WTC11 (cell line): ENCODE measurements at regions of chr14 and their contacts with region 1.

Region 1: DNA sequence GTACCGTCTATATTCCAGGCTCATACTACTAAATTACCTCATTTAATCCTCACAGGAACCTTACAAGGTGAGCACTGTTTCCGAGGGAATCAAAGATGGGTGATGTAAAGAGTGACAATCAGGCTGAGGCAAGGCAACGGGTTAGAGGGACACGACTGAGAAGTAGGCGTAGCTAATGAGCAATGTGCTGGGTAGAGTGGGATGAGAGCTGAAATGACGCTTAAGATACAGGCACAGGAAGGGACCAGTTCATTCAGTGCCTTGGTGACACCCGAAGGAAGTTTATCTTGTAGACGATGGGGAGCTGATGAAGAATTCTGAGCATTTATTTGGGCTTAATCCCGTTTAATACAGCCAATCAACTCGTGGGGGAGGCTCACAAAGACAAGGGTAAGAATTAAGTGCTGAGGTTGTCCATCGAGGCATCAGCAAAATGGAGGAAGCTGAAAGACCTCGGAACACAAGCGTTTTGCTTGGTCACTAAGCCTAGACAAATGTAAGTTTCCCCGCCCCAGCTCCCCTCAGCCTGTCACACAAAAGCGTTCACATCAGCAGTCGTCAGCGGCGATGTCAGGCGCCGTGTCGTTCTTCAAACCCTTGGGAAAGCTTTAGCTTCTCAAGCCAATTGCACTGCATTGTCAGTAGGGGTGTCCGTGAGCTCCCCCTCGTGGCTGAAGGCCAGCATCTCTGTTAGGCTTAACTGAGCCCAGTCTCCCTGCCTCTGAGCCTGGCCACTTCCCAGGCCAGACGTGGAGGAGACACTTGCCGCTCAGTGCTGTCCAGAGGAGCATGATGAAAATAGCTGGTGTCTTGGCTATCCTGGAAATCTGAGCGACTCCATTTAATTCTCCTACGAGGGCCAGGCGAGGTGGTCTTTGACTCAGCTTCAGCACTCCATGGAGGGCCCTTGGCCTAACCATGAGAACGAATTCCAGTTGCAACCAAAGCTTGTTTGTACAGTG is 288.5 kb upstream of the G2E3 start:
- DNase-seq: peak; percentile 95
- ATAC-seq: peak; percentile 99
- H3K4me3 Mint-ChIP-seq: peak overlapping the region; percentile 57
- H3K27ac Mint-ChIP-seq: no peak overlapping the region
- H3K4me1 Mint-ChIP-seq: peaks cover 26% of the 10 kb centered on the region
- H3K27me3 Mint-ChIP-seq: peaks cover 4% of the 10 kb centered on the region; the same call in 1 of the 2 replicates
- CTCF ChIP-seq: peak; percentile 67

Region 2: GRCh38 chr14:29971101-29971500 is 299.4 kb before region 1 on chr14:
- CTCF ChIA-PET with region 1: no interaction called
- POLR2A ChIA-PET with region 1: no interaction called
- DNase-seq: no peak
- ATAC-seq: peak; percentile 39; the same call in 1 of the 2 replicates
- H3K4me3 Mint-ChIP-seq: no peak overlapping the region
- H3K27ac Mint-ChIP-seq: no peak overlapping the region
- H3K4me1 Mint-ChIP-seq: no peaks in the 10 kb centered on the region
- H3K27me3 Mint-ChIP-seq: no peaks in the 10 kb centered on the region
- CTCF ChIP-seq: no peak

Region 3: GRCh38 chr14:30240685-30241084 is 29.8 kb before region 1 on chr14:
- CTCF ChIA-PET with region 1: interaction called, 16 read pairs
- POLR2A ChIA-PET with region 1: no interaction called
- DNase-seq: no peak
- ATAC-seq: 0 out of 2 replicates have a peak, but pooled peaks have one; percentile 18
- H3K4me3 Mint-ChIP-seq: no peak overlapping the region
- H3K27ac Mint-ChIP-seq: no peak overlapping the region
- H3K4me1 Mint-ChIP-seq: peaks cover 25% of the 10 kb centered on the region
- H3K27me3 Mint-ChIP-seq: no peaks in the 10 kb centered on the region
- CTCF ChIP-seq: no peak

Region 4: DNA sequence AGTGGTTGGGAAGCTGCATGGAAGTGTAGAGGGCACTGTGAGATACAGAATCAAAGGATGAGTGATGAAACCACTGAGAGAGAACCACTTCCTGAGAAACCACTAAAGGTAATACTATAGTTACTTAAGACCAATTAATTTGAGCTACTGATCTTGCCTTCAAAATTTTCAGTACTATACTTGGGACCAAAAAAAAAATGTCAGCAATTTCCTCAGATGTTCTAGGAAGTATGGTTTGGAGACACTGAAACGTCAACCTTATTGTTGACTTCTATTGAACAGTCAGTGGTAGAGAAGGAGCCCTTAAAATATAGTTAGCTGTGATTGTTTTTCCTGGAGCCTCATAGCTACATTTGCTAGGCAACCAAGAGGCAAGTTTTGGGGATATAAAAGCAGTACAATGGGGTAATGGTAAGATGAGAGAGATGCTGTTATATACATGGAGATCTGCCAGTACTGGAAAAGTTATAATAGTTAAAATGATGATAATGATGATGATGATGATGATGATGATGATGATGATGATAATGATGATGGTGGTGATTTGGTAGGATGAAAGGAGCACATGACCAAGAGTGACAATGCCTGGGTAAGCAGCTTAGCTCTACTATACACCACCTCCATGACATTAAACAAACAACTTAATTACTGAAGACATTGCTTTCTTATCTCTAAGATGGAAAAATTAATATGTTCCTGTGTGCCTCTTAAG is 12.4 kb before region 1 on chr14:
- CTCF ChIA-PET with region 1: interaction called, 36 read pairs
- POLR2A ChIA-PET with region 1: no interaction called
- DNase-seq: no peak
- ATAC-seq: no peak
- H3K4me3 Mint-ChIP-seq: no peak overlapping the region
- H3K27ac Mint-ChIP-seq: no peak overlapping the region
- H3K4me1 Mint-ChIP-seq: peaks cover 21% of the 10 kb centered on the region
- H3K27me3 Mint-ChIP-seq: no peaks in the 10 kb centered on the region
- CTCF ChIP-seq: no peak

Region 5: DNA sequence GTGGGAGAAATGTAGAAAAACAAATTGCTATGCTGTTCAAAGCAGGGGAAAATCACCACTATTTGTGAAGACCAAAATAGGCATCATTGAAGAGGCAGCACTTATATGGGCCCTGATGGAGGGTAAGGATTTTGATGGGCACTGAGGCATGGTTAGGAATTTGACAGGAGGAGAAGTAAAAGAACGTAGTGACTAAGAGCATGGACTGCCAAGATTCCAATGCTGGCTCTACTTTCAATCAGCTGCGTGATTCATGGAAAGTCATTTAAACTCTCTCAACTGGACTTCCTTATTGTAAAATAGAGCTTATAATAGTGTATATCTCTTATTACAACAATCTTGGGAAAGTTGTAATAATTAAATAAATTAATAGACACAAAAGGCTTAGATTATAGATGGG is 20.7 kb after region 1 on chr14:
- CTCF ChIA-PET with region 1: interaction called, 150 read pairs
- POLR2A ChIA-PET with region 1: no interaction called
- DNase-seq: no peak
- ATAC-seq: no peak
- H3K4me3 Mint-ChIP-seq: no peak overlapping the region
- H3K27ac Mint-ChIP-seq: no peak overlapping the region
- H3K4me1 Mint-ChIP-seq: peaks cover 3% of the 10 kb centered on the region
- H3K27me3 Mint-ChIP-seq: no peaks in the 10 kb centered on the region
- CTCF ChIP-seq: no peak

Region 6: DNA sequence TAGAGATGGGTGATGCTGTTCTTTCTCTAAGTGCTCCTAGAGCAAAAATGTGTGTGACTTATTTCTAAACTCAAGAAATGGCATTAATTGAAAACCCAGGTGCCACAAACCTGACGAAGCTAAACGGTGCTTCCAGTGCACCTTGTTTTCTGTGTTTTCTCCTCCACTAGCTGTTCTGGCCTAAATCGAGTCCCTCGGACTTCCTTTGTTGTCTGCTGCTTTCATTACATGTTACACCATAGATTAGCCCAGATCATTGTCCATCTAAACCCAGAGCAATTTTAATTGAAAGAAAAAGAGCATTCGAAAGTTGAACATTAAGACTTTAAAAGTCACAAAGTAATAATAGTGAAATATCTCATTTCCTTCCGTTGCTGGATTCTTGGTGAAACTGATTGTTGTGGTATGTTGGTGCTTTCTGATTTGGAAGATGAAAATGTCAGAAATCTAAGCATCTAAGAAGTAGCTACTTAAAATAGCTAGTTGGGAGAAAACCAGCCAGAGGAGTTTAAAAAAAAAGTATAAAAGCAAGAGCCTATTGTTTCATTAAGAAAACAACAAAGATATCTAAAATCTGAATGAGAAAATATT is 68.9 kb after region 1 on chr14:
- CTCF ChIA-PET with region 1: interaction called, 10 read pairs
- POLR2A ChIA-PET with region 1: no interaction called
- DNase-seq: no peak
- ATAC-seq: no peak
- H3K4me3 Mint-ChIP-seq: no peak overlapping the region
- H3K27ac Mint-ChIP-seq: no peak overlapping the region
- H3K4me1 Mint-ChIP-seq: no peaks in the 10 kb centered on the region
- H3K27me3 Mint-ChIP-seq: peaks cover 1% of the 10 kb centered on the region
- CTCF ChIP-seq: no peak

Region 7: GRCh38 chr14:30417121-30417520 is 146.6 kb after region 1 on chr14:
- CTCF ChIA-PET with region 1: no interaction called
- POLR2A ChIA-PET with region 1: no interaction called
- DNase-seq: no peak
- ATAC-seq: no peak
- H3K4me3 Mint-ChIP-seq: no peak overlapping the region
- H3K27ac Mint-ChIP-seq: no peak overlapping the region
- H3K4me1 Mint-ChIP-seq: peaks cover 6% of the 10 kb centered on the region
- H3K27me3 Mint-ChIP-seq: no peaks in the 10 kb centered on the region
- CTCF ChIP-seq: no peak

Region 8: GRCh38 chr14:30443368-30444007 is 173.0 kb after region 1 on chr14:
- CTCF ChIA-PET with region 1: interaction called, 38 read pairs
- POLR2A ChIA-PET with region 1: no interaction called
- DNase-seq: no peak
- ATAC-seq: peak; percentile 59; the same call in 1 of the 2 replicates
- H3K4me3 Mint-ChIP-seq: no peak overlapping the region
- H3K27ac Mint-ChIP-seq: no peak overlapping the region
- H3K4me1 Mint-ChIP-seq: peaks cover 8% of the 10 kb centered on the region
- H3K27me3 Mint-ChIP-seq: no peaks in the 10 kb centered on the region
- CTCF ChIP-seq: no peak